AG04449 (cell line): ENCODE measurements at regions of chr15 and their contacts with region 1.

Region 1: GRCh38 chr15:71114896-71115554 is at the start of gene THSD4:
- DNase-seq: no peak
- H3K4me3 ChIP-seq: peak within 1 kb of the TSS; percentile 64
- CTCF ChIP-seq: peak; percentile 98

Region 2: DNA sequence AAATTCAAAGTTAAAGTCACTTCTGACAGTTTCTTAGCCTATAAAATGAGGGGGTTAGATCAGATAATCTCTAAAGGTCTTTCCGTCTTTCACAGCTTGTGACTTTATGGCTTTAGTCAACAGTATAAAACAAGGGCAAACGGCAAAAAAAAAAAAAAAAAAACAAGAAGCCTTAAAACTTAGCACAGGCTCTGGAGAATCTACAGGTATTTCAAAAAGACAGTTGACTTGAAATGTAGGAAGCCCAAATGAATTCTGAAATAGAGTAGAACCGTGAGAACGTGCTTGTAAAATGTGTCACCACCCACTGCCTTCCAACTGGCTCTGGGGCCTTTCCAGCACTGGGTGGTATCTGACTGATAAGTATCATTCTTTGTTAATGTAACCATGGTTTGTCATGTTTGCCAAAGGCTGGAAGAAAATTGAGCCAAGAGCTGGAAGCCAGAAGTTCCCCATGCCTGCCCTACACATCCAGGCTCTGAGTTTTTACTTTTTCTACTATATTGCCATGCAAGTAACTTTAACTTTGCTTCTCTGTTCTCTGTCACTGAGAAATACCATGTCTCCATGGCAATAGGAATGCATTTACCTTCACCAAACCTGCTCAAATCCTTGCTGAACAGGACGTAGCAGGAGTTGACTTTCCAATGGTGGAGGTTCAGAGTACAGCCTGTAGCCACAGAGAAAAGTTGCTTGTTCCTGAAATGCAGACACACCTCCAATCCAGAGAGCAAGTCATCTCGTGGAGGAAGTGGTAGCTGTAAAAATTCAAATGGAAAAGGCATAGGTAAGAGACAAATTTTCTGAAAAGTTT is 35.6 kb before region 1 on chr15:
- CTCF ChIA-PET with region 1: no interaction called
- POLR2A ChIA-PET with region 1: no interaction called
- DNase-seq: no peak
- H3K4me3 ChIP-seq: no peak overlapping the region
- CTCF ChIP-seq: no peak

Region 3: GRCh38 chr15:71125831-71126453 is 10.9 kb after region 1 on chr15:
- CTCF ChIA-PET with region 1: interaction called, 21 read pairs
- POLR2A ChIA-PET with region 1: no interaction called
- DNase-seq: no peak
- H3K4me3 ChIP-seq: no peak overlapping the region
- CTCF ChIP-seq: peak; percentile 5